SK-N-SH (cell line): ENCODE measurements at regions of chr6 and their contacts with region 1.

Region 1: GRCh38 chr6:73520688-73521350 is at the start of gene EEF1A1:
- DNase-seq: peak; percentile 96
- H3K4me3 ChIP-seq: peak within 1 kb of the TSS; percentile 95 to 99
- H3K27ac ChIP-seq: peak within 1 kb of the TSS; percentile 98 to 99
- H3K4me1 ChIP-seq: peaks cover 12 to 18% of the 10 kb centered on the region in 2 experiments; a peak in 3 of 4 replicates
- H3K27me3 ChIP-seq: no peaks in the 10 kb centered on the region
- CTCF ChIP-seq: no peak
- EP300 ChIP-seq: no peak
- RAD21 ChIP-seq: no peak
- polyA plus RNA-seq, gene EEF1A1: 10,787 and 14,148 TPM in 2 replicates

Region 2: DNA sequence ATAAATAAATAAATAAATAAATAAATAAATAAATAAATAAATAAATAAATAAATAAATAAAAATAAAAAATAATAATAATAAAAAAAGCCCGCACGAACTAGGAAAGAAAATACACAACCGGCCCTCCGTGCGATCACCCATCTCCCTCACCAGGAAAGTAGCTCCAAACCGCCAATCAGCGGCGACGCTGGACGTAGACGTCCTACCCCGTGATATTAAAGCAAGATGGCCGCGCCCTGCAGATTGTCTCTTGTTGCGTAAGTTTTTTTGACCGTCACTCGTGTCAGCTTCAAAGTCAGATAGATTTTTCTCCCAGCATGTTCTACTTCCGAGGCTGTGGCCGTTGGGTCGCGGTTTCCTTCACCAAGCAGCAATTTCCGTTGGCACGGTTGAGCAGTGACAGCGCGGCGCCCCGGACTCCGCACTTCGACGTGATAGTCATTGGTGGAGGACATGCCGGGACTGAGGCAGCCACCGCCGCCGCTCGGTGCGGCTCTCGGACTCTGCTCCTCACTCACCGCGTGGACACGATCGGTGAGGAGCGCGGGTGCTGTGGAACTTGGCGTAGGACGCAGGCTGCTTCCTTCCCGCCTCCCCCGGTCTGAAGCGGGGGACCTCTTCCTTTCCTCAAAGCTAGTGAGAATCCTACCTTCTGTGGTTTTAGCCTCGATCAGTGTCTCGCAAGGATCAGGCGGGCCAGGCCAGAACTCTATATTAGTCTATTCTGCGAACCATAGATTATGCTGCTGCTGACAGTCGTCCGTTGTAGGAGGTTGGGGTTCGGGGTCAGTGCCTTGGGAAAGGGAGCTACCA is 59.1 kb before region 1 on chr6 and contains the start of gene MTO1:
- CTCF ChIA-PET with region 1: interaction called, 3 read pairs
- POLR2A ChIA-PET with region 1: interaction called, 16 read pairs
- DNase-seq: peak; percentile 87
- H3K4me3 ChIP-seq: peak within 1 kb of the TSS; percentile 82 to 99
- H3K27ac ChIP-seq: peak within 1 kb of the TSS; percentile 84 to 94
- H3K4me1 ChIP-seq: no peaks in the 10 kb centered on the region; a peak in 1 of 4 replicates
- H3K27me3 ChIP-seq: no peaks in the 10 kb centered on the region
- CTCF ChIP-seq: no peak
- EP300 ChIP-seq: no peak
- RAD21 ChIP-seq: no peak
- polyA plus RNA-seq, gene MTO1: 9.9 and 11.4 TPM in 2 replicates